Activated CD4-positive, alpha-beta T cell treated with anti-CD3 and anti-CD28 coated beads for 36 hours (primary cell): ENCODE measurements at regions of chr11 and their contacts with region 1.

Region 1: DNA sequence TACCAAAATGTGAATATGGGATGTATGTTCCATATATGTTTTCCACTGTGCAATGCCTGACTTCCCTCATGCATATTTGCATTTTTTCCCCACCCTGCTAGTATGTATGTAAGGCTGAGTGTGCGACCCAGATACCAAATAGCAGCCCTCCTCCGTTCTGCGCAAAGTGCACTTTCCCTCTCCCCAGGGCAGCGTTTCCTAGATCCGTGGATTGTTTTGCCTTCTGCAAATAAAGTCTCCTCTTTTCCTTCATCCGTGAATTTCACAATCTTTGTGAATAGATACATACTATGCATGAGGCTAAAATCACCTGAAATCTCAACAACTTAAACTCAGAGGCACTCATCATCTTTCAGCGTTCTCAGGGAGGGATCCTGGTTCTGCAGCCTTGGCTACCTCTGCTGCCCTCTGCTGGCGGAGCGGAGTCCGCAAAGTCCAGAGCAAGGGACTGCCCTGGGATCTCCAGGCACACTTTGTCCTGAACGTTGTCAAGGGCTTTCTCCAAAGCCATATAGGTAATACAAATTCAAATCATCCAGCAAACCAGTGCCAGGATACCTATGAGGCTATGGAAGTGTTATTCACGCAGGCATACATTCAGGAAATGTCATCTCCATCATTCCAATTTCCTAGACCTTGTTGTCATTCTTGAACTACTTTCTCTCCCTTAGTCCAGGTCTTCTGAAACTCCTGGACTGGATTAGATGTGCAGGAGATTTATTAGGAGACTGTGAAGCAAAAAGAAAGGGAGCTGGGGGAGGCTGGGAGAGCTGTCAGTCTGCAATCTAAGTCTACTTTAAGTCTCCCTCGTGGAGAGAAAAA is 53.1 kb downstream of the CNTF start:
- DNase-seq: peak; percentile 88
- ATAC-seq: peak; percentile 94
- H3K4me3 Mint-ChIP-seq: no peak overlapping the region
- H3K27ac Mint-ChIP-seq: no peak overlapping the region
- H3K4me1 Mint-ChIP-seq: no peaks in the 10 kb centered on the region
- H3K27me3 Mint-ChIP-seq: no peaks in the 10 kb centered on the region

Region 2: GRCh38 chr11:58685973-58686722 is 10.6 kb after region 1 on chr11:
- CTCF ChIA-PET with region 1: interaction called, 10 read pairs
- POLR2A ChIA-PET with region 1: no interaction called
- intact Hi-C with region 1: no loop called
- DNase-seq: peak; percentile 28
- ATAC-seq: peak; percentile 79
- H3K4me3 Mint-ChIP-seq: no peak overlapping the region
- H3K27ac Mint-ChIP-seq: no peak overlapping the region
- H3K4me1 Mint-ChIP-seq: peaks cover 13% of the 10 kb centered on the region
- H3K27me3 Mint-ChIP-seq: peaks cover 4% of the 10 kb centered on the region

Region 3: DNA sequence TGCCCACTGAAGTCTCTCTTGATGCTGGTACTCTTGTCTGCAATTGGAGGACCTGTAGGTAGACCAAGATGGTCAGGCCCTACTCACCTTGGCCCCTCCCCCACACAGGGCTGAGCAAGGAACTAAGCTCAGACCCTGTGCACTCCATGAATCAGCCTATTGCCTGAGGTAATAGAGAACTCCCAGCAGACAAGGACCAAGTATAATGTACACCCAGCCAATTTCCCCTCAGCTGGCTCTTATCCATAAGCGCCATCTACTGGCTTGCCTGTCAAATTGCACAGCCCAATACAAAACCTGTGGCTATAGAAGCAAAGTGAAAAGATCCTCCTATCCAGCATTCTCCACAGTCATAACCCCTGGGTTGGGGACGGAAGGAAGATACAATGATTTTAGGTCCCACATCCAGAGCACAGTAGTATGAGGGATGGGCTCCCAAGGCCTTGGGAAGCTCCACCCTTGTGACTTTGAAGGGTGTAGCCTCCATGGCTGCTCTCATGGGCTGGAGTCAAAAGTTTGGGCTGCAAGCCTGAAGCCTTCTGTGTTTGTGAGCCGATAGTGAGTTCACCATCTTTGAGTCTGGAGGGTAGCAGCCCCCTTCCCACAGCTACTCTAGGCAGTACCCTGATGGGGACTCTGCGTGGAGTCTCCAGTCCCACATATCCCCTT is 112.9 kb after region 1 on chr11:
- CTCF ChIA-PET with region 1: interaction called, 5 read pairs
- POLR2A ChIA-PET with region 1: no interaction called
- intact Hi-C with region 1: loop called in 1 of 2 experiments (anchors 1 kb)
- DNase-seq: peak; percentile 58
- ATAC-seq: peak; percentile 87
- H3K4me3 Mint-ChIP-seq: no peak overlapping the region
- H3K27ac Mint-ChIP-seq: no peak overlapping the region
- H3K4me1 Mint-ChIP-seq: no peaks in the 10 kb centered on the region
- H3K27me3 Mint-ChIP-seq: peaks cover 4% of the 10 kb centered on the region

Region 4: GRCh38 chr11:58856806-58857205 is 181.3 kb after region 1 on chr11:
- CTCF ChIA-PET with region 1: no interaction called
- POLR2A ChIA-PET with region 1: no interaction called
- intact Hi-C with region 1: no loop called
- DNase-seq: no peak
- ATAC-seq: no peak
- H3K4me3 Mint-ChIP-seq: no peak overlapping the region
- H3K27ac Mint-ChIP-seq: no peak overlapping the region
- H3K4me1 Mint-ChIP-seq: no peaks in the 10 kb centered on the region
- H3K27me3 Mint-ChIP-seq: peaks cover 9% of the 10 kb centered on the region